T-cell (primary cell): ENCODE measurements at regions of chrX and their contacts with region 1.

Region 1: GRCh38 chrX:107654872-107655761 is 26.8 kb downstream of the PRPS1 start:
- DNase-seq: peak; percentile 37 to 78 (median 60)
- ATAC-seq: peak; percentile 85 to 89 (median 87)
- H3K4me3 ChIP-seq: no peak overlapping the region
- H3K4me3 Mint-ChIP-seq: no peak overlapping the region
- H3K27ac ChIP-seq: no peak overlapping the region
- H3K27ac Mint-ChIP-seq: peak overlapping the region in 1 of 2 donors; percentile 55
- H3K4me1 ChIP-seq: peaks cover 0 to 15% of the 10 kb centered on the region in 2 experiments
- H3K4me1 Mint-ChIP-seq: peaks cover 11 to 20% (median 13%) of the 10 kb centered on the region in 3 donors
- H3K27me3 ChIP-seq: no peaks in the 10 kb centered on the region
- H3K27me3 Mint-ChIP-seq: peaks cover 0 to 22% of the 10 kb centered on the region in 2 donors

Region 2: GRCh38 chrX:106725931-106726330 is 929.2 kb before region 1 on chrX:
- CTCF ChIA-PET with region 1: interaction called in 1 of 2 experiments, 10 read pairs
- POLR2A ChIA-PET with region 1: no interaction called
- DNase-seq: no peak
- ATAC-seq: no peak
- H3K4me3 ChIP-seq: peak overlapping the region in 1 of 2 donors; percentile 11
- H3K4me3 Mint-ChIP-seq: peak overlapping the region; percentile 53 to 66 (median 59)
- H3K27ac ChIP-seq: no peak overlapping the region
- H3K27ac Mint-ChIP-seq: no peak overlapping the region
- H3K4me1 ChIP-seq: peaks cover 0 to 3% of the 10 kb centered on the region in 2 experiments
- H3K4me1 Mint-ChIP-seq: peaks cover 0 to 12% (median 4%) of the 10 kb centered on the region in 3 donors
- H3K27me3 ChIP-seq: peaks cover 0 to 12% of the 10 kb centered on the region in 2 experiments
- H3K27me3 Mint-ChIP-seq: peaks cover 33 to 47% of the 10 kb centered on the region in 2 donors

Region 3: DNA sequence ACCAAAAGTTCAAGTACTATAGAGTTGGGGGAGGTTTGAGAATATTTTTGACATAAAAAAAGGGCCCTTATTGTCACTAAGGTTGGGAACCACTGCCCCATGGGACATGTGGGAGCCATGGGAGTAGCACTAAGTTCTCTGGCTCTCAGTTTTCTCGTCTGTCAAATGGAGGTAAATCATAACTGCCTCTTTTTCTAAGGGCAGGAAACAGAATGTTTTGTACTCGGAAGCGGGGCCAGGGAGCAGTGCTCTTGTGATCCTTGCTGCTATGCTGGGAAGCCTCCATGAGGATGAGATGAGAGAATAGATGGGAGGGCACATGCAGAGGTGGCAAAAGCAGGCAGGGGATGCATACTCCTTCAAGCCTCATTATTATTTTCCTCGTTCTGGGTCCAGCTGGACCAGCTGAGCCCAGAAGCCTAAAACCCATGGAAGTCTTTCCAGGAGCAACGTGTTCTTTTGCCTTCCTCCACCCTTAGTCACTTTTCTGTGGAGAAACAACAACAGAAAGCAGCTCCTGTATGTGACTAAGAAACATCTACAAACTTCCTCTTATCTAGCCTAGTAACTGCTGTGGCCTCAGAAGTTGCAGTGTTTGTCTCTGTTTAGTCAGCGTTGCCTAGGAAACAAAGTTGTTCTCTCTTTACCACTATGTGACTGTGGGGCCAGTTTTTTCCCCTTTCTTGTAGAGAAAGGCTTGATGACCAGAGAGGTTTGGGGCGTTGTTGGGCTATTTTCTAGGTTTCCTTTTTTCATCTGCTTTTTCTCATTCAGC is 55.7 kb after region 1 on chrX:
- CTCF ChIA-PET with region 1: interaction called in 1 of 2 experiments, 11 read pairs
- POLR2A ChIA-PET with region 1: interaction called, 4 to 18 read pairs
- DNase-seq: peak in 30 of 35 experiments; percentile 7 to 90 (median 56)
- ATAC-seq: peak; percentile 43 to 84 (median 76)
- H3K4me3 ChIP-seq: peak overlapping the region in 1 of 2 donors; percentile 27
- H3K4me3 Mint-ChIP-seq: peak overlapping the region; percentile 66 to 89 (median 74)
- H3K27ac ChIP-seq: peak overlapping the region; percentile 99
- H3K27ac Mint-ChIP-seq: peak overlapping the region; percentile 98 to 100
- H3K4me1 ChIP-seq: peaks cover 14 to 55% of the 10 kb centered on the region in 2 experiments
- H3K4me1 Mint-ChIP-seq: peaks cover 68 to 74% (median 71%) of the 10 kb centered on the region in 3 donors
- H3K27me3 ChIP-seq: no peaks in the 10 kb centered on the region
- H3K27me3 Mint-ChIP-seq: peaks cover 0 to 6% of the 10 kb centered on the region in 2 donors

Region 4: DNA sequence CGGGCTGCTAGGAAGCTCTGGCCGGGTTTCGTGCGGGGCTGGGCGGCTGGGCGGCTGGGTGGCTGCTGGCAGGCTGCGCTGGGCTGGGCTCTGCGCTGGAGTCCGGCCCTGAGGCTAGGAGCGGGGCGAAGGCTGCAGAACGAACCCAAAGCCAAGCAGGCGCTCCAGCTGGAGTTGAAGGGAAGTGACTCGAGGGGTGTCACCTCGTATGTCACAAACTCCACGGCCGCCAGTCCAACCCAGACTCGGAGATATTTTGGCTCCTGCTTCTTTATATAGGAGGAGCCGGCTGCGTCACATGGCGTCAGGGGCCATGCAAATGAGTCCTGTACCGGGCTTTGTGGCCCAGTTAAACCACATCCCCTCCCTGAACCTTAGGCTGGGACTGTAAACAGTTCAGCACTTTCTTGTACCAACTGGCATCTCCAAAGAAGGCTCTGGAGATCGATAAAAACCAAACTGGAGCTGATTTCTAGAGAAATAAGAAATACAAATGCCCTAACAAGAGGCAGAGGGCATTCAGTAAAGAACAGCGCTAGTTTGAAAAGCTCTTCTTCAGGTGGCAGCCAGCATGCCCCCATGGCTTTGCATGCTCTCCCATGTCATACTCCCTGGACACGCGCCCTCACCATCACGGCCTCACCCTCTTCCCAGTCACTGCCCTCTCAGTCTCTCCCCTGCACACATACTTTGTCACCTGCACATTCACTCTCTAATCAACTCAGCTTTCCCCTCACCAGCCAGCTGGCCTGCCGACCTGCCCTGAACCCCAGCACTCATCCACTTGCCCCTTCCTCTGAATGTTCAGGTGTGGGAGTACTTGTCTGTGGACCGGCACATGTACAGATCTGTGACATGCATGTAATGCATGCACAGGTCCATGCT is 61.9 kb after region 1 on chrX:
- CTCF ChIA-PET with region 1: interaction called, 11 to 16 read pairs
- POLR2A ChIA-PET with region 1: interaction called in 1 of 2 experiments, 4 read pairs
- DNase-seq: peak; percentile 77 to 94 (median 89)
- ATAC-seq: peak; percentile 71 to 87 (median 84)
- H3K4me3 ChIP-seq: peak overlapping the region; percentile 88 to 94
- H3K4me3 Mint-ChIP-seq: peak overlapping the region; percentile 89 to 96 (median 95)
- H3K27ac ChIP-seq: peak overlapping the region; percentile 99
- H3K27ac Mint-ChIP-seq: peak overlapping the region; percentile 94 to 100
- H3K4me1 ChIP-seq: peaks cover 11 to 51% of the 10 kb centered on the region in 2 experiments
- H3K4me1 Mint-ChIP-seq: peaks cover 49 to 59% (median 58%) of the 10 kb centered on the region in 3 donors
- H3K27me3 ChIP-seq: no peaks in the 10 kb centered on the region
- H3K27me3 Mint-ChIP-seq: peaks cover 0 to 8% of the 10 kb centered on the region in 2 donors

Region 5: DNA sequence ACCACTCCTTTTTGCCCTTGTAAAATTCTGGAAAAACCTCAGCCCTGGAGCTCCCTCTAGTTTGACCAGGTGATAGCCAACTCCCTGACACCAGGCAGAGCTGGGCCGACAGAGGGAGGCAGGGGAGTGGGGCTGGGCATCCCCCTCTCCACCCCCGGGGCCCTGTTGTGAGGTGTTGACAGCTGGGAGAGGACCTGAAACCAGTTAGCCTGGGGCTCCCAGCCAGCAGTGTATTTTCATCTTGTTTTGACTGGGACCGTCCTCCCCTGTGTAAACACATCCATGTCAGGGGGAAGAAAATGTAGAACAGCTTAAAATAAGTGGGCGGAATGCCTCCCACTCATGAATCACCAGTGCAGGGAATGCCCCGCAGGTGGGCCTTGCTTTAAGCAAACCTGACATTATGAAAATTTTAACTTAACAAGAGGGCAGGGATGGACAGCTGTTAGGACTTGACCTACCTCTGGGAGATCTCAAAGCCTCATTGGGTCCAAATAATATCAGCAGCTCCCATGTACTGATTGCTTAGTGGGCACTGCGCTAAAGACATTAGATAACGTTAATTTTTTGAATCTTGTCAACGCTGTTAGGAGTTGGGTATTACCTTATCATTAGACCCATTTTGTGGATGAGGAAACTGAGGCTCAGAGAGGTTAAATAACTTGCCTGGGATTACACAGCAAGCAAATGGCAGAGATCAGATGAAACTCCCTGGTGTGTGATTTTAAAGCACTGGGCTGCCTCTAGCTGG is 74.6 kb after region 1 on chrX:
- CTCF ChIA-PET with region 1: interaction called in 1 of 2 experiments, 10 read pairs
- POLR2A ChIA-PET with region 1: no interaction called
- DNase-seq: no peak
- ATAC-seq: no peak
- H3K4me3 ChIP-seq: no peak overlapping the region
- H3K4me3 Mint-ChIP-seq: no peak overlapping the region
- H3K27ac ChIP-seq: no peak overlapping the region
- H3K27ac Mint-ChIP-seq: no peak overlapping the region
- H3K4me1 ChIP-seq: no peaks in the 10 kb centered on the region
- H3K4me1 Mint-ChIP-seq: peaks cover 0 to 6% (median 6%) of the 10 kb centered on the region in 3 donors
- H3K27me3 ChIP-seq: no peaks in the 10 kb centered on the region
- H3K27me3 Mint-ChIP-seq: peaks cover 0 to 6% of the 10 kb centered on the region in 2 donors

Region 6: DNA sequence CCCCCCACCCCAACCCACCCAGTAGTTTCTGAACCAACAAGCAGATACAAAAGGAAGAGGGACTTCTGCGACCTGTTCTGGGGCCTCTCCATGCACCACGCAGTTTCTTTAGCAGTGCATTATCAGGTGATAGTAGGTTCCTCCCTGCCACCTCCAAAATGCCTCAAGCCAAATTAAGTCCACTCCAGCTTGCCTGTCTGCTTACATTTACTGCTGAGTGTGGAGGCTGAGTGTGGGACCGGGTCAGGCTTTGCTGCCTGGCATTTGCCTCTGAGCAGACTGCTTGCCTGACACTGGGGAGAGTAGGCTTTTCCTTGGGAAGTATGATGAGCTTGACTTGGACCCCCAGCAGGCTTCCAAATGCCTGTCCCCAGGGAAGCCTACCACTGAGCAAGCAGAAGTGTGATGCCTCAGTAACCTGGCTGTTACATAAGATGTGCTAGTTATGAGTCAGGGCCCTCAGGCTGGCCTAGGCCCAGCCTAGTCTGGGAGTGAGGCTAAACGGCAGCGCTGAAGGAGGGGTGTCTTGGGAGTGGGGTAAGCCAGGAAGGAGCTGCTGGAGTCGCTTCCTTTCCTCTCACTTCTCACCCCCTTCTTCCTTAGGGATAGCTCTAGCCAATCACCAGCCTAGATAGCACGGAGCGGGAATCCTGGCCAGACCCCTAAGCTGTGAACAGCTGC is 111.5 kb after region 1 on chrX:
- CTCF ChIA-PET with region 1: interaction called in 1 of 2 experiments, 12 read pairs
- POLR2A ChIA-PET with region 1: no interaction called
- DNase-seq: no peak
- ATAC-seq: no peak
- H3K4me3 ChIP-seq: no peak overlapping the region
- H3K4me3 Mint-ChIP-seq: no peak overlapping the region
- H3K27ac ChIP-seq: no peak overlapping the region
- H3K27ac Mint-ChIP-seq: no peak overlapping the region
- H3K4me1 ChIP-seq: no peaks in the 10 kb centered on the region
- H3K4me1 Mint-ChIP-seq: peaks cover 0 to 6% (median 5%) of the 10 kb centered on the region in 3 donors
- H3K27me3 ChIP-seq: no peaks in the 10 kb centered on the region
- H3K27me3 Mint-ChIP-seq: peaks cover 0 to 7% of the 10 kb centered on the region in 2 donors

Region 7: DNA sequence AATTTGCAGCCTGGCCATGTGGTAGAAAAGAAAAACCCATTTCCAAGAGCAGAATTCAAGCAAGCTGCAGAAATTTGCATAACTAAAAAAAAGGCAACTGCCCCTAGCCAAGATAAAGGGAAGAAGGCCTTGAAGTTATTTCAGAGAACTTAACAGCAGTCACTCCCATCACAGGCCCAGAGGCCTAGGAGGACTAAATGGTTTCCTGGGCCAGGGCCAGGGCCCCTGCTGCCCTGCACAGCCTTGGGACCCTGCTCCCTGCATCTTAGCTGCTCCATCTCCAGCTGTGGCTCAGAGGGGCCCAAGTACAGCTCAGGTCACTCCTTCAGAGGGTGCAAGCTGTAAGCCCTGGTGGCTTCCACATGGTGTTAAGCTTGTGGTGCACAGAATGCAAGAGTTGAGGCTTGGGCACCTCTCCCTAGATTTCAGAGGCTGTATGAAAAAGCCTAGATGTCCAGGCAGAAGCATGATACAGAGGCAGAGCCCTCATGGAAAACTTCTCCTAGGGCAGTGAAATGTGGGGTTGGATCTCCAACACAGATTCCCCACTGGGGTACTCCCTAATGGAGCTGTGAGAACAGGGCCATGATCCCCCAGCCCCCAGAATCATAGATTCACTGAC is 163.9 kb after region 1 on chrX:
- CTCF ChIA-PET with region 1: no interaction called
- POLR2A ChIA-PET with region 1: no interaction called
- DNase-seq: no peak
- ATAC-seq: no peak
- H3K4me3 ChIP-seq: no peak overlapping the region
- H3K4me3 Mint-ChIP-seq: no peak overlapping the region
- H3K27ac ChIP-seq: no peak overlapping the region
- H3K27ac Mint-ChIP-seq: no peak overlapping the region
- H3K4me1 ChIP-seq: no peaks in the 10 kb centered on the region
- H3K4me1 Mint-ChIP-seq: peaks cover 4 to 6% (median 6%) of the 10 kb centered on the region in 3 donors
- H3K27me3 ChIP-seq: peaks cover 0 to 2% of the 10 kb centered on the region in 2 experiments
- H3K27me3 Mint-ChIP-seq: peaks cover 0 to 9% of the 10 kb centered on the region in 2 donors